ENCODE measurements at regions of chr1 and their contacts with region 1.

Region 1: DNA sequence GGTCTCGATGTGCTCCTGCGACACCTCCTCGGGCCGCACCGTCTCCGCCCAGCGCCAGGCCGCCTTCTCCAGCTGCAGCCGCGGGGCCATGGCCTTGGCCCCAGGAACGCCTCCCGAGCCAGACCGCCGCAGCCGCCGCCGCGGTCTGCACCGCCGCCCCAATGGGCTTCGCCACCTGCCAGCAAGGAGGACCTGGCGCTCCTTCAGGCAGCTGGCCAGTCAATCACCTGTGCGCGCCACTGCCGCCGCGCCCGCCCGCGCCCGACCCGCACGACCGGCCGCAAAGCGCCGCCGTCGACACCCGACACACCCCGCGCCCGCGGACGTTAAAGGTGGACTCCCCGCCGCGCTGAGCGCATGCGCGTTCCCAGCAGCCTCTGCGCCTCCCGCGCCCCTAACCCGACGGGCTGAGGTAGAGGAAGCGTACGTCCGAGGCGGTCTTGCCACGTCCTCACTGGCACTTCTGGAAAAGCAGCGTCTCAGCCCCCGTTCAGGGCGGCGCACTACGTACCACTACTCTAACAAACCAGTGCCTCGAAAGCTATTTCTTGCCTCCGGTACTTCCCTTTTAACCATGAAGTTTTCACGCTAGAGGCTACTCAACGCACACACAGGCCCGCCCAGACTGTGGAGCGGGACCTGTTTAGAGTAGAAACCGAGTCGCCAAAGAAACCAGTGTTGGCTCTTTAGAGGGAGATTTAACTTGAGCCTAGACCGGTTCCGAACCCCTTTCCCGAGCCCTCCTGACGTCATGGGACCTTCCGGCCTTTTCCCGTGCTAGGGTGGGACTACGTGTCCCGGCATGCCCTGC is at the start of gene USP48:
- DNase-seq: peak; percentile 95 to 98 (median 97)
- ATAC-seq: peak; percentile 92
- H3K4me3 ChIP-seq: peak within 1 kb of the TSS; percentile 93
- H3K4me3 Mint-ChIP-seq: peak within 1 kb of the TSS; percentile 92 to 99 (median 98)
- H3K27ac ChIP-seq: peak within 1 kb of the TSS; percentile 99
- H3K27ac Mint-ChIP-seq: peak within 1 kb of the TSS; percentile 99 to 100 (median 100)
- H3K4me1 ChIP-seq: peaks cover 19 to 23% of the 10 kb centered on the region in 2 donors
- H3K4me1 Mint-ChIP-seq: peaks cover 19 to 40% (median 34%) of the 10 kb centered on the region in 7 donors
- H3K27me3 ChIP-seq: no peaks in the 10 kb centered on the region
- H3K27me3 Mint-ChIP-seq: peaks cover 0 to 9% (median 0%) of the 10 kb centered on the region in 5 donors
- total RNA-seq, gene USP48: 74.7 to 107 (median 83.9) TPM

Region 2: DNA sequence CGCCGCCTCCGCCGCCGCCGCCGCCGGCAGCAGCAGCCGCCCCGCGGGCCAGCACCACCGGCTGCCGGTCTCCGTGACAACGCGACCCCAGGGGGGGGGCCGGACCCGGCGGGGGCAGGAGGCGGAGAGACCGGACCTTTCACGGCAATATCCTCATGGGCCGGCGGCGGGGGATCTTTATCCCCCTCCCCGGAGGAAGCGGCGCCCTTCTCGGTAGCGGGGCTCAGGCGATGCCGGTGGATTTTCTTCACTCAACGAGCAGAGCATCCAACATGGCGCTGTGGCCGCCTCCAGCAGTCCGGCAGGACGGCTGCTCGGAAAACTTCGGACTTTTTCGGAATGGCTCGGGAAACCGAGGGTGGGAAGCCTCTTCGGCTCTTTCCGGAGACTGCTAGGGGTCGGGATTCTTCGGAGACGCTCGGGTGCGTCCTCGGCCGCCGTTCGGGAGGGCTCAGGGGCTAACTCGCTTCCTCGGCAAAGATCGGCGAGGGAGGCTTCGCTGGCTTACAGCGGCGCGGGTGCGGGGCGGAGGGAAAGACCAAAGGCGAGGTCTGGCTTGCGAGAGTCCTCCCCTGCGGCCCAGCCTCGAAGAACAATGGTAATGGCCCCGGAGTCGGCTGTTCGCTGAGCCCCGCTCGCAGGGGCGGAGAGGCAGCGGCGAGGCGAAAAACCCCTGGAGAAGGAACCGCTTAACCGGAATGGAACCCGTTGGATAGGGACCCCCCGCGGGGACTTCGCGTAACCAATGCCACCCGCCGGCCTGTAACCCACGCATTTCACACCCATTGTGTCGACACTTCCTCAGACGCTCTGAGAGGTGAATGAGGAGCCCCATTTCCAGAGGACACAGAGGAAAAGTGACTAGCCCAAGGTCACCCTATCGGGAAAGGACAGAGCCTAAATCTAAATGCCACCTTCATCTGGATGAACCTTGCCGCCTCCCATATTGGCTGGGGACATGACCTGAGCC is 606.2 kb before region 1 on chr1 and contains the start of gene EIF4G3:
- CTCF ChIA-PET with region 1: no interaction called
- POLR2A ChIA-PET with region 1: no interaction called
- intact Hi-C with region 1: loop called in 1 of 2 experiments (anchors 5 kb)
- DNase-seq: peak; percentile 96 to 100 (median 99)
- ATAC-seq: peak; percentile 96
- H3K4me3 ChIP-seq: peak within 1 kb of the TSS; percentile 87
- H3K4me3 Mint-ChIP-seq: peak within 1 kb of the TSS; percentile 83 to 97 (median 91)
- H3K27ac ChIP-seq: peak within 1 kb of the TSS; percentile 75
- H3K27ac Mint-ChIP-seq: peak within 1 kb of the TSS; percentile 87 to 95 (median 92)
- H3K4me1 ChIP-seq: peaks cover 8 to 9% of the 10 kb centered on the region in 2 donors
- H3K4me1 Mint-ChIP-seq: peaks cover 11 to 28% (median 19%) of the 10 kb centered on the region in 7 donors
- H3K27me3 ChIP-seq: no peaks in the 10 kb centered on the region
- H3K27me3 Mint-ChIP-seq: peaks cover 0 to 10% (median 0%) of the 10 kb centered on the region in 5 donors
- total RNA-seq, gene EIF4G3: 15.0 to 46.3 (median 29.1) TPM

Region 3: DNA sequence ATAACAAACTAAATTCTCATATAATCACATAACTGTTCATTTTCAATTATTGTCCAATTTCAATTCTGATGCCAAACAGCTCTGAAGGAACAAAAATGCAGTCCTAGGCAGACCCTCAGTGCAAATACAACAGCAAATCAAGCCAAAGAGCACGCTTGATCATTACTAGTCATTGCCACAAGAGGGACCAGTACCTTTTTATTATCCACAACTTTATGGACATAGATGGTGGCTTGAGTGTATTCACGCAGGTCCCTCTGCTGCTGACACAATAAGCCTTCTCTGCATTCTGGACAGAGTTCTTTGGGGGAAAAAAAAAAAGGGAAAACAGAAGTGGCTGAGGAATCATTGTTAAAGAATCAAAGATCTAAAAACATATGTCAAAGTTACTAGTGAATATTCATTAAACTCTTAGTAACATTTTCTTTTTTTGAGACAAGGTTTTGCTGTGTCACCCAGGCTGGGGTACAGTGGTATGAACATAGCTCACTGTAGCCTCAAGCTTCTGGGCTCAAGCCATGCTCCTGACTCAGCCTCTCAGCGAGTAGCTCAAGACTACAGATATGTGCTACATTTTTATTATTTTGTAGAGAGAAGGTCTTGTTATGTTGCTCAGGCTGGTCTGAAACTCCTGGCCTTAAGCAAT is 79.6 kb before region 1 on chr1:
- CTCF ChIA-PET with region 1: no interaction called
- POLR2A ChIA-PET with region 1: no interaction called
- intact Hi-C with region 1: loop called in 1 of 2 experiments (anchors 5 kb)
- DNase-seq: peak in 2 of 9 donors; percentile 5 to 8
- ATAC-seq: peak; percentile 44
- H3K4me3 ChIP-seq: no peak overlapping the region
- H3K4me3 Mint-ChIP-seq: no peak overlapping the region
- H3K27ac ChIP-seq: no peak overlapping the region
- H3K27ac Mint-ChIP-seq: peak overlapping the region in 1 of 9 donors; percentile 4
- H3K4me1 ChIP-seq: no peaks in the 10 kb centered on the region
- H3K4me1 Mint-ChIP-seq: peaks cover 0 to 24% (median 0%) of the 10 kb centered on the region in 7 donors
- H3K27me3 ChIP-seq: no peaks in the 10 kb centered on the region
- H3K27me3 Mint-ChIP-seq: no peaks in the 10 kb centered on the region

Region 4: GRCh38 chr1:21937372-21938221 is 154.5 kb after region 1 on chr1:
- CTCF ChIA-PET with region 1: interaction called, 3 read pairs
- POLR2A ChIA-PET with region 1: no interaction called
- intact Hi-C with region 1: loop called in 1 of 2 experiments (anchors 1 kb)
- DNase-seq: peak; percentile 49 to 79 (median 61)
- ATAC-seq: peak; percentile 96
- H3K4me3 ChIP-seq: peak overlapping the region; percentile 47
- H3K4me3 Mint-ChIP-seq: peak overlapping the region; percentile 81 to 97 (median 92)
- H3K27ac ChIP-seq: peak overlapping the region; percentile 60
- H3K27ac Mint-ChIP-seq: peak overlapping the region; percentile 46 to 95 (median 85)
- H3K4me1 ChIP-seq: peaks cover 0 to 25% of the 10 kb centered on the region in 2 donors
- H3K4me1 Mint-ChIP-seq: peaks cover 13 to 42% (median 23%) of the 10 kb centered on the region in 7 donors
- H3K27me3 ChIP-seq: no peaks in the 10 kb centered on the region
- H3K27me3 Mint-ChIP-seq: peaks cover 0 to 44% (median 0%) of the 10 kb centered on the region in 5 donors

Region 5: DNA sequence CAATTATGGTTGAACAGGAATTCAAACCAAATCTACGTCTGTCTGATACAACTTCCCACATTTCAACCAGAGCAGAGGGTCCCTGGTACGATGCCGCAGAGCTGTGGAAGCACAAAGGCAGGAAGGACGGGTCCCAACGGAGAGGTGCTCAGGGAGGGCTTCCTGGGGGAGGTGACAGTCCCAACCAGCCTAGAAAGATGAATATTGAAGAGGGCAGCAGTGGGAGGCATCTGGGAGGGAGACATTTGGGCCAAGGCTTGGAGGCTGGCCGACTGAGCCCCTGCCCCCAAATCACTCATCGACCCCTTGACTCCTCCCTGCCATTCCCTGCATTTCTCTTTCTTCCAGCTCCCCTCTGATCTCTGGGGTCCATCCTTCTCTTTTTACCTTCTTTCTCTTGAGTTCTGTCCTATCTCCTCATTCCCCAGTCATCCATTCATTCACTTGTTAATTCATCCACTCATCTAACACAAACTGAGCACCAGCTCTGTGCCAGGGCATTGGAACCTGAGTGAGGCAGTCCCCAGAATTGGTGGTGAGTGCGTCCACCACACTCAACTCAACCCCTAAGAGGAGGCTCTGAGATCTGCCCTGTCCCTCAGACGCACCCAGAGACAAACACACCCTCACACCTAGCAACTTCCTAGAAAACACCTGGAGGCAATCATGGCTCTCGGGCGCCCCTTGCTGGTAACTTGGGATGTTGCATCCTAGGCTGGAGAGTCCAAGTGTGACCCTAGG is 180.6 kb after region 1 on chr1:
- CTCF ChIA-PET with region 1: no interaction called
- POLR2A ChIA-PET with region 1: interaction called, 4 read pairs
- intact Hi-C with region 1: loop called in 1 of 2 experiments (anchors 1 kb)
- DNase-seq: peak; percentile 63 to 89 (median 78)
- ATAC-seq: peak; percentile 95
- H3K4me3 ChIP-seq: no peak overlapping the region
- H3K4me3 Mint-ChIP-seq: peak overlapping the region in 2 of 10 donors; percentile 2 to 11
- H3K27ac ChIP-seq: no peak overlapping the region
- H3K27ac Mint-ChIP-seq: peak overlapping the region; percentile 38 to 94 (median 63)
- H3K4me1 ChIP-seq: no peaks in the 10 kb centered on the region
- H3K4me1 Mint-ChIP-seq: peaks cover 6 to 18% (median 11%) of the 10 kb centered on the region in 7 donors
- H3K27me3 ChIP-seq: no peaks in the 10 kb centered on the region
- H3K27me3 Mint-ChIP-seq: peaks cover 0 to 7% (median 0%) of the 10 kb centered on the region in 5 donors

Region 6: DNA sequence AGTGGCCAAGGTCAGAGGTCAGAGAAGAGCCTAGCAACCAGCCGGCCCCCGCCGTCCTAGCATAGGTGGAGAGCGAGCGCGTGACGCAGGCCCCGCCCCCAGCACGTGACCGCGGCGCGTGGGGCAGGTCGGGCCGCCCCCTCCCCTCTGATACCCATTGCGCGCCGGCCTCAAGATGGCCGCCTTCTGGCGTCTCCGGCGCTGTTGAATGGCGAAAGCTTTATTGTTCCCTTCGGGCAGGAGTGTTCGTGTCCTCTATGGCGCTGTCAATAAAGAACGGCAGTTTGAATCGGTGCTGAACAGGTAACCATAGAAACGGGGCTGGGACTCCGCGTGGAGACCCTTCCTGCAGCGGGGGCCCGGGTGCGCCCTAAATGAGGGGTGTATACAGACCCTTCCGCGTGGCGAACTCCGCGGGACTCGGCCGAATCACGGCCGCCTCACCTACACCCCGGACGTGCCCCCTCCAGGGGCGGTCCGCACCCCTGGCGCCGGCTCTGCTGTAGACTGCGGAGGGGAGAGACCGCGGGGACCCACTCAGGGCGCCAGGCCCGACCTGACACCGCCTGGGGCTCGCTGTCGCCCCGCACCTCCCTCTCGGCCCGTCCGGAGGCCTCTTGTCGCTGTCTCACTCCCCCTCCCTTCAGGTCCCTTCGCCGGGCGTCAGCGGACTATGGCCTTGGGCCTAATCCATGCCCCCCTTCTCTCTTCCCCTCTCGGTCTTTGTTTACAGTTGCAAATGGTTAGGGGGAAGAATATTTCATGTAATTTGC is 668.8 kb after region 1 on chr1 and contains the start of gene ZBTB40:
- CTCF ChIA-PET with region 1: no interaction called
- POLR2A ChIA-PET with region 1: no interaction called
- intact Hi-C with region 1: loop called (anchors 1 kb)
- DNase-seq: peak; percentile 92 to 96 (median 94)
- ATAC-seq: peak; percentile 98
- H3K4me3 ChIP-seq: peak within 1 kb of the TSS; percentile 83
- H3K4me3 Mint-ChIP-seq: peak within 1 kb of the TSS; percentile 86 to 98 (median 92)
- H3K27ac ChIP-seq: peak within 1 kb of the TSS; percentile 85
- H3K27ac Mint-ChIP-seq: peak within 1 kb of the TSS; percentile 91 to 98 (median 95)
- H3K4me1 ChIP-seq: peaks cover 4 to 10% of the 10 kb centered on the region in 2 donors
- H3K4me1 Mint-ChIP-seq: peaks cover 11 to 52% (median 47%) of the 10 kb centered on the region in 7 donors
- H3K27me3 ChIP-seq: no peaks in the 10 kb centered on the region
- H3K27me3 Mint-ChIP-seq: peaks cover 0 to 4% (median 0%) of the 10 kb centered on the region in 5 donors
- total RNA-seq, gene ZBTB40: 23.1 to 60.6 (median 43.5) TPM

Region 7: GRCh38 chr1:23344111-23344986 is 1561.3 kb after region 1 on chr1 and contains the start of gene HNRNPR:
- CTCF ChIA-PET with region 1: no interaction called
- POLR2A ChIA-PET with region 1: no interaction called
- intact Hi-C with region 1: loop called in 1 of 2 experiments (anchors 10 kb)
- DNase-seq: peak; percentile 90 to 99 (median 97)
- ATAC-seq: peak; percentile 97
- H3K4me3 ChIP-seq: peak within 1 kb of the TSS; percentile 89
- H3K4me3 Mint-ChIP-seq: peak within 1 kb of the TSS; percentile 81 to 100 (median 94)
- H3K27ac ChIP-seq: peak within 1 kb of the TSS; percentile 83
- H3K27ac Mint-ChIP-seq: peak within 1 kb of the TSS; percentile 89 to 98 (median 97)
- H3K4me1 ChIP-seq: peaks cover 25 to 28% of the 10 kb centered on the region in 2 donors
- H3K4me1 Mint-ChIP-seq: peaks cover 34 to 47% (median 45%) of the 10 kb centered on the region in 7 donors
- H3K27me3 ChIP-seq: no peaks in the 10 kb centered on the region
- H3K27me3 Mint-ChIP-seq: no peaks in the 10 kb centered on the region
- total RNA-seq, gene HNRNPR: 97.4 to 235 (median 117) TPM

Measured in naive thymus-derived CD4-positive, alpha-beta T cell (primary cell).